Left ventricle myocardium inferior (tissue), 1 donor: ENCODE measurements at regions of chr1 and their contacts with region 1.

Region 1: GRCh38 chr1:173429471-173430402 is 47.4 kb upstream of the PRDX6 start:
- DNase-seq: peak; percentile 88
- H3K4me3 ChIP-seq: peak overlapping the region; percentile 39
- H3K27ac ChIP-seq: peak overlapping the region; percentile 87
- H3K4me1 ChIP-seq: peaks cover 31% of the 10 kb centered on the region
- H3K27me3 ChIP-seq: no peaks in the 10 kb centered on the region
- CTCF ChIP-seq: peak; percentile 69

Region 2: GRCh38 chr1:173476664-173477285 is 47.0 kb after region 1 on chr1:
- intact Hi-C with region 1: loop called (anchors 5 kb)
- DNase-seq: peak; percentile 94
- H3K4me3 ChIP-seq: peak overlapping the region; percentile 89
- H3K27ac ChIP-seq: peak overlapping the region; percentile 99
- H3K4me1 ChIP-seq: peaks cover 83% of the 10 kb centered on the region
- H3K27me3 ChIP-seq: no peaks in the 10 kb centered on the region
- CTCF ChIP-seq: no peak

Region 3: GRCh38 chr1:173714759-173715537 is 285.2 kb after region 1 on chr1 and contains the start of gene KLHL20:
- intact Hi-C with region 1: loop called (anchors 10 kb)
- DNase-seq: peak; percentile 69
- H3K4me3 ChIP-seq: peak within 1 kb of the TSS; percentile 93
- H3K27ac ChIP-seq: peak within 1 kb of the TSS; percentile 96
- H3K4me1 ChIP-seq: peaks cover 36% of the 10 kb centered on the region
- H3K27me3 ChIP-seq: peaks cover 9% of the 10 kb centered on the region
- CTCF ChIP-seq: peak; percentile 15
- total RNA-seq, gene KLHL20: 16.2 TPM